Dendritic cell treated with granulocyte-macrophage colony-stimulating factor and Interleukin-4, amounts not matched to agents 40 ng/mL and 50 ng/mL, for 4 days (primary cell): ENCODE measurements at regions of chr1 and their contacts with region 1.

Region 1: GRCh38 chr1:22983934-22984333 is 11.3 kb upstream of the LACTBL1 start:
- H3K4me3 Mint-ChIP-seq: no peak overlapping the region
- H3K27ac Mint-ChIP-seq: no peak overlapping the region
- H3K4me1 Mint-ChIP-seq: no peaks in the 10 kb centered on the region
- H3K27me3 Mint-ChIP-seq: peaks cover 10% of the 10 kb centered on the region

Region 2: DNA sequence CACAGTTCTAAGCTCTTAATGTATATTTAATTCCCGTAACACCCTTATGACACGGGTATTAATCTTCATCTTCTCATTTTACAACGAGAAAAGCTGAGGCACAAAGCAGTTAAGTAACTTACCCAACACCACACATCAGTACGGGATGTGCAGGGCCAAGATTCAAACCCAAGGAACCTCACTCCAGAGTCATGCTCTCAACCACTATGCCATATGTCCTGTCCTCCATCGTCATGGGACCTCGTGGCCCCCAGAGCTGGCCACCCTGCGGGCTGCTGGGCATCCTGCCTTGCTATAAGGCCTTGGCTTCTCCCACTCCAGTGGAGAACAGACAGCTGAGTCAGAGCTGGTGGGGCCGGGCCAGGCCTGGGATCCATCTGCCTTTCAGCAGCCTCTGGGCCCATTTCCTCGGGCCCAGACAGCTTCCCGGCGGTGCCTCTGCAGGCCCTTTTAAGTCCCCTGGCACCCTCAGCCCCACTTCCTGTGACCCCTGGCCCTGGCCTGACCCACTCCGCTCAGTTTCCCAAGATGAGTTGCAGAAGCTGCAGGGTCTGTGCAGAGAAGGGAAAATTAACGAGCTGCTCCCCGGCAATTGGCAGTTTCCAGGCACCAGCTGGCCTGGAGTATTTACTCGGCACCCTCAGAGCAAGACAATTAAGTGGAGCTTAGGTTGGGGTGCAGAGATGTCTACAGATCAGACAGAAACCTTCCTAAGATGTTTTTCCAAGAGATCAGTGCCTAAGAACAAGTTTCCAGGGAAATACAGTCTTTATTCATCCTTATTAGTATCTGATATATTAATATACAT is 175.1 kb before region 1 on chr1:
- intact Hi-C with region 1: no loop called
- H3K4me3 Mint-ChIP-seq: no peak overlapping the region
- H3K27ac Mint-ChIP-seq: no peak overlapping the region
- H3K4me1 Mint-ChIP-seq: no peaks in the 10 kb centered on the region
- H3K27me3 Mint-ChIP-seq: peaks cover 17% of the 10 kb centered on the region

Region 3: GRCh38 chr1:22892789-22893188 is 91.1 kb before region 1 on chr1:
- intact Hi-C with region 1: no loop called
- H3K4me3 Mint-ChIP-seq: no peak overlapping the region
- H3K27ac Mint-ChIP-seq: no peak overlapping the region
- H3K4me1 Mint-ChIP-seq: peaks cover 8% of the 10 kb centered on the region
- H3K27me3 Mint-ChIP-seq: peaks cover 7% of the 10 kb centered on the region

Region 4: GRCh38 chr1:22936681-22937080 is 47.3 kb before region 1 on chr1:
- intact Hi-C with region 1: no loop called
- H3K4me3 Mint-ChIP-seq: no peak overlapping the region
- H3K27ac Mint-ChIP-seq: no peak overlapping the region
- H3K4me1 Mint-ChIP-seq: no peaks in the 10 kb centered on the region
- H3K27me3 Mint-ChIP-seq: peaks cover 11% of the 10 kb centered on the region

Region 5: DNA sequence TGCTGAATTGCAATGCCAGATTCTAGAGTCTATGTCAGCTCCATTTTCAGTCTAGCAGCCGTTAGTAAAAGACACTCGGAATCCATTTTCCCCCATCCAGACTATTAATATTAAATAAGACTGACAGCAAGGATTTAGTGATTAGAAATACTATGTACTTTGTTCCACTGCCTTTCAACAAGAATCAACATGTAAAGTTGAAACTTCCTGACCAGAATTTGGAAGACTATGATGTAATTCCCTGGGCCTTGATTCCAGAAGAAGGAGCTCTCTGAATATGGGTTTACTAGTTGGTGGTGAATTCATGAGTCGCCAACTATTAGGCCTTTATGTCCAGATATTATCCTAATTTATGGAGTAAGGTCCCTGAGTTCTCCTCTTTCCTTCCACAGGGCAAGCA is 60.1 kb after region 1 on chr1:
- intact Hi-C with region 1: loop called (anchors 10 kb)
- H3K4me3 Mint-ChIP-seq: no peak overlapping the region
- H3K27ac Mint-ChIP-seq: no peak overlapping the region
- H3K4me1 Mint-ChIP-seq: peaks cover 4% of the 10 kb centered on the region
- H3K27me3 Mint-ChIP-seq: no peaks in the 10 kb centered on the region